Left ventricle myocardium superior (tissue), 1 donor: ENCODE measurements at regions of chr4 and their contacts with region 1.

Region 1: DNA sequence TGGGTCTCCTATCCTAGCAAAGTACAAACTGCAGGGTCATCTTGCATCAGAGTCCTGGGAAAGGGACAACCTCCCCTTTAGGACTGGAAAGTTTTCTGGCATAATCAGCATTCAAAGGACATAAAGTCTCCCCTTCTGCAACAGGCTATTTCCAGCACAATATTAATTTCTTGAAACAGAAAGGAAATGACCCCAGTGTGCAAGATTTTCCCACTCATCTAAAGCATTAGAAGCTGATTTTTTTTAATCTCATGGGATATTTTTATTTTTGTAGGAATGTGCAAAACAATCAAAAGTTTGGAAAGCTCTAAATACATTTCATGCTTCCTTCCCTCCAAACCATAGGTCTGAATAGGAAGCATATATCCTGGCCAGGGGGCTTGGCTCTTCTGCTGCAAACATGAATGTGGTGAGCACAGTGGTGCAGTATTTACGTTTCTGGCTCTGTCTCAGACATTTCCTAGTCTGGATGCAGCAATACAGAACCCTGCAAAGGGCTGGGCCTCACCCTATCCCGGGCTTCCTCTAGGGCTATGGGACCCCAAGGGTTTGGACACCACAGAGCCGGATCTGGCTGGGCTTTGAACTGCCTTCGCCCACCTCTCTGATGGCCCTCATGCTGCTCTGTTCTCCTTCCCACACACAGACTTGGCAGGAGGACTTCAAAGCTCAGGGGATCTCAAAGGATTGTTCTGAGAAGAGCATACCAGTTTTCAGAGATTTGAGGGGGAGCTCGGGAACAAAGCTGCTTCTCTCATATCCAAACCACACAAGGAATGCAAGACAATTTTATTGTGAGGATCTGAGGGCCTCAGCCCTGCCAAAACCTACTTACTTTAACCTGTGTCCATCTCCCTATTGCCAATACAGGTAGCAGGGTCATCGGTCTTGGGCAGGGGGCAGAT is 64.9 kb downstream of the POLR2B start:
- DNase-seq: peak; percentile 35
- ATAC-seq: peak; percentile 74

Region 2: GRCh38 chr4:57020467-57021101 is 23.0 kb before region 1 on chr4:
- intact Hi-C with region 1: no loop called
- DNase-seq: no peak
- ATAC-seq: peak; percentile 48

Region 3: DNA sequence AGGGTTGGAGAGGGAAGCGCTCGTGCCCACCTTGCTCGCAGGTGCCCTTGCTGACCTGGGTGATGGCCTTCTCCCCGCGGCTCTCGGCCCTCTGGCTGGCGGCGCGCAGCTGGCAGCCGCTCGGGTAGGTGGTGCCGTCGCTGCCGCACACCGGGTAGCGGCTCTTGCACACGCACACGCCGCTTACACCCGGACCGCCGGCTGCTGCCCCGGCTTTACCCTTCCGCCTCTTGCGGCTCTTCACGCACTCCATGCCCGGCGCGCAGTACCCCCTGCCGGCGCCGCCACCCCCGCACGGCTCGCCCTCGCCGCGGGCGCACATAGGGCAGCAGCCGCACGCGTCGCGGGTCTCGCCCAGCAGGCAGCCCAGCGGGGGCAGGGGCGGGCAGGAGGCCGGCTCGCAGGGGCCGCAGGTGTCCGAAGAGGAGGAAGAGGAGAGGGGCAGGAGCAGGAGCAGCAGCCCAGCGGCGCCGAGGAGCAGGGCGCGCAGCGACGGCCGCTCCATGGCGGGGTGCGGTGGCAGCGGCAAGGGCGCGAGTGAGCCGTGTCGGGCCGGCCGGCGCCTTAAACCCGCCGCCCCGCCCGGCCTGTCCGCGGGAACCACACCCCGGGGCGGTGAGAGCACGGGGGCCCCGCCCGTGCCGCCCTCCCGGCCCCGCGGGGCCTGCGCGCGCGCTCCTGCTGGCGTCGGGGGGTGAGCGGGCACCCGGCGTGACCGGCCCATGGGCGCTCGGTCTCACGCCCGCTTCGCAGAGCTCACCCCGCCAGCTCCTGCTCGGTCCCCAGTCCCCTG is 66.4 kb after region 1 on chr4 and contains the start of gene IGFBP7:
- intact Hi-C with region 1: loop called (anchors 5 kb)
- DNase-seq: peak; percentile 88
- ATAC-seq: peak; percentile 93
- total RNA-seq, gene IGFBP7: 723 TPM